ENCODE measurements at regions of chr17 and their contacts with region 1.

Region 1: GRCh38 chr17:10135539-10136257 is 62.7 kb downstream of the GAS7 start:
- DNase-seq: peak; percentile 38
- H3K4me3 ChIP-seq: no peak overlapping the region
- H3K27me3 ChIP-seq: no peaks in the 10 kb centered on the region
- CTCF ChIP-seq: no peak

Region 2: GRCh38 chr17:10198509-10199253 is 63.0 kb after region 1 on chr17 and contains the start of gene GAS7:
- CTCF ChIA-PET with region 1: no interaction called
- POLR2A ChIA-PET with region 1: interaction called, 13 read pairs
- DNase-seq: no peak
- H3K4me3 ChIP-seq: peak within 1 kb of the TSS; percentile 49
- H3K27me3 ChIP-seq: peaks cover 19% of the 10 kb centered on the region
- CTCF ChIP-seq: no peak
- polyA plus RNA-seq, gene GAS7: 1.2 and 1.4 TPM in 2 replicates

Measured in BJ (cell line).